Posterior cingulate gyrus (tissue), 11 donors: ENCODE measurements at regions of chr14 and their contacts with region 1.

Region 1: DNA sequence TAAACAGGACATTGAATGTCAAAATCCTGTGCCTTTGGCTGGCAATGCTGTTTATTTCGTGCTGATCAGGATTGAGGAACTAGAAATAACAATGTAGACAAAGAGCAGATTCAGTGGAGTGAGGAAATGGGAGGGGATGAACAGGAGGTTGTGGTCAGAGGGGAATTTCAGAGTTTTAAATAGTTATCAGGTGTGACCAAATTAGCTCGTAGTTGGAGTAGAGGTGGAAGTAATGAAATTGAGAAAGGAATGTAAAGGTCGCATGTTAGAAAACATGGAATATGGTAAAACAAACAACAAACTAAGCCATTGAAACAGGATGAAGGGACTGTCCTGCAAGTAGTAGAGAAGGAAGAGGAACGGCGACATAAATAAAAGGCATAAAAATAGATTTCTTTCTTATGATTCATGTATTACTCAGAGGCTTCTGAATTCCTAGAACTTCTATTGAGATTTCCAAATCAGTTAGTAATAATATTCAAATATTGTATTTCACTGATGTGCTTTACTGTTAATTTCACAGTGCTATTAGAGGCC is 9.5 kb upstream of the SAV1 start:
- DNase-seq: no peak

Region 2: GRCh38 chr14:50719911-50720759 is 42.5 kb after region 1 on chr14:
- intact Hi-C with region 1: loop called (anchors 5 kb)
- DNase-seq: no peak

Region 3: GRCh38 chr14:50927987-50928635 is 250.5 kb after region 1 on chr14:
- intact Hi-C with region 1: no loop called
- DNase-seq: no peak